Natural killer cell (primary cell): ENCODE measurements at regions of chr19 and their contacts with region 1.

Region 1: GRCh38 chr19:32570081-32570785 is 10.8 kb upstream of the PDCD5 start:
- DNase-seq: peak; percentile 47 to 80
- ATAC-seq: peak; percentile 83 to 96 (median 93)
- H3K4me3 ChIP-seq: no peak overlapping the region
- H3K4me3 Mint-ChIP-seq: peak overlapping the region; percentile 56
- H3K27ac ChIP-seq: no peak overlapping the region
- H3K27ac Mint-ChIP-seq: no peak overlapping the region
- H3K4me1 ChIP-seq: peaks cover 11% of the 10 kb centered on the region
- H3K4me1 Mint-ChIP-seq: peaks cover 15% of the 10 kb centered on the region in 2 donors
- H3K27me3 ChIP-seq: no peaks in the 10 kb centered on the region
- H3K27me3 Mint-ChIP-seq: peaks cover 6 to 8% of the 10 kb centered on the region in 2 donors
- CTCF ChIP-seq: peak; percentile 91

Region 2: DNA sequence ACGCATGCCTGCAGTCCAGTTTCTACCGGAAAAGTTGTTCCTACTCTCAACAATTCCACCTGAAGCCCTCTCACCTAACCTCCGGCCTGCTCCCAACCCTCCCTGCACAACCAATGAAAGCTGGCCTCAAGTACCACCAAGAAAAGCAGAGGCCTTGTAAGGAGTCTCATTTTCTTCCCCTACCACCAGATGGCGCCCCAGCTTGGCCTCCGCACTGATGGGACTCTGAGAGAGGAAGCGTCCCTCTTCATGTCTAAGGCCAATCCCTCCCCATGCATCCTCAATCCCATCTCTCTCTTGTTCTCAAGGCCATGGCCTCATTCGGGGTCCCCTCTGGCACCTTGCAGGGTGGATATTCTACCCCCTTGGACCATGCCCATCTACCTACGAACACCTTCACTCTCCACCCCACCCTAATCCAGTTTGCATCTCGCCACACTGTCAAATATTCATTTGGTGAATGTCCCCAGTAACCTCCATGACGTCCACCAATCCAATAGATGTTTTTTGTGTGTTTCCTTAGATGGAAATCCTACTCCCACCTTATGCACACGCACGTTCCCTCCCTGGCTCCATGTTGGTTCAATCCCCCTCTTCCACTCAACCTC is 1785.3 kb before region 1 on chr19:
- intact Hi-C with region 1: loop called (anchors 10 kb)
- DNase-seq: peak; percentile 61 to 71
- ATAC-seq: peak in 2 of 3 donors; percentile 44 to 67
- H3K4me3 ChIP-seq: no peak overlapping the region
- H3K4me3 Mint-ChIP-seq: no peak overlapping the region
- H3K27ac ChIP-seq: no peak overlapping the region
- H3K27ac Mint-ChIP-seq: no peak overlapping the region
- H3K4me1 ChIP-seq: no peaks in the 10 kb centered on the region
- H3K4me1 Mint-ChIP-seq: no peaks in the 10 kb centered on the region
- H3K27me3 ChIP-seq: no peaks in the 10 kb centered on the region
- H3K27me3 Mint-ChIP-seq: peaks cover 2 to 7% of the 10 kb centered on the region in 2 donors
- CTCF ChIP-seq: peak; percentile 68

Region 3: GRCh38 chr19:32339988-32340874 is 230.0 kb before region 1 on chr19:
- intact Hi-C with region 1: loop called (anchors 1 kb)
- DNase-seq: peak; percentile 35 to 63
- ATAC-seq: peak; percentile 69 to 84 (median 82)
- H3K4me3 ChIP-seq: no peak overlapping the region
- H3K4me3 Mint-ChIP-seq: no peak overlapping the region
- H3K27ac ChIP-seq: no peak overlapping the region
- H3K27ac Mint-ChIP-seq: no peak overlapping the region
- H3K4me1 ChIP-seq: peaks cover 1% of the 10 kb centered on the region
- H3K4me1 Mint-ChIP-seq: no peaks in the 10 kb centered on the region
- H3K27me3 ChIP-seq: no peaks in the 10 kb centered on the region
- H3K27me3 Mint-ChIP-seq: no peaks in the 10 kb centered on the region
- CTCF ChIP-seq: peak; percentile 70

Region 4: GRCh38 chr19:32464279-32464678 is 106.0 kb before region 1 on chr19:
- intact Hi-C with region 1: loop called (anchors 1 kb)
- DNase-seq: peak in 1 of 2 donors; percentile 19
- ATAC-seq: peak in 2 of 3 donors; percentile 36 to 65
- H3K4me3 ChIP-seq: no peak overlapping the region
- H3K4me3 Mint-ChIP-seq: no peak overlapping the region
- H3K27ac ChIP-seq: no peak overlapping the region
- H3K27ac Mint-ChIP-seq: no peak overlapping the region
- H3K4me1 ChIP-seq: no peaks in the 10 kb centered on the region
- H3K4me1 Mint-ChIP-seq: no peaks in the 10 kb centered on the region
- H3K27me3 ChIP-seq: no peaks in the 10 kb centered on the region
- H3K27me3 Mint-ChIP-seq: no peaks in the 10 kb centered on the region
- CTCF ChIP-seq: peak; percentile 57